K562 (cell line): ENCODE measurements at regions of chr3 and their contacts with region 1.

Region 1: GRCh38 chr3:128867200-128868125 is 12.0 kb upstream of the ACAD9 start:
- DNase-seq: no peak
- ATAC-seq: no peak
- H3K4me3 ChIP-seq: no peak overlapping the region
- H3K27ac ChIP-seq: no peak overlapping the region
- H3K4me1 ChIP-seq: peaks cover 11 to 20% of the 10 kb centered on the region in 2 experiments
- H3K27me3 ChIP-seq: no peaks in the 10 kb centered on the region
- CTCF ChIP-seq: no peak
- EP300 ChIP-seq: no peak
- POLR2A ChIP-seq: no peak
- RAD21 ChIP-seq: no peak

Region 2: GRCh38 chr3:129289201-129289921 is 421.9 kb after region 1 on chr3:
- CTCF ChIA-PET with region 1: no interaction called
- POLR2A ChIA-PET with region 1: no interaction called
- in situ Hi-C with region 1: no loop called
- intact Hi-C with region 1: no loop called
- DNase-seq: no peak
- ATAC-seq: no peak
- H3K4me3 ChIP-seq: no peak overlapping the region
- H3K27ac ChIP-seq: no peak overlapping the region
- H3K4me1 ChIP-seq: no peaks in the 10 kb centered on the region; a peak in 2 of 5 replicates
- H3K27me3 ChIP-seq: no peaks in the 10 kb centered on the region
- CTCF ChIP-seq: no peak
- EP300 ChIP-seq: no peak
- POLR2A ChIP-seq: no peak
- RAD21 ChIP-seq: no peak

Region 3: GRCh38 chr3:129481766-129482332 is 614.4 kb after region 1 on chr3:
- CTCF ChIA-PET with region 1: no interaction called
- POLR2A ChIA-PET with region 1: no interaction called
- in situ Hi-C with region 1: loop called (anchors 5 kb)
- intact Hi-C with region 1: no loop called
- DNase-seq: peak; percentile 22 to 46 (median 24)
- ATAC-seq: peak; percentile 78
- H3K4me3 ChIP-seq: no peak overlapping the region
- H3K27ac ChIP-seq: no peak overlapping the region; the same call in 2 of the 3 replicates
- H3K4me1 ChIP-seq: peaks cover 14 to 21% of the 10 kb centered on the region in 2 experiments; a peak in 4 of 5 replicates
- H3K27me3 ChIP-seq: no peaks in the 10 kb centered on the region
- CTCF ChIP-seq: no peak
- EP300 ChIP-seq: no peak
- POLR2A ChIP-seq: no peak
- RAD21 ChIP-seq: no peak